Activated T-helper 1 cell treated with anti-CD3 and anti-CD28 coated beads, Interleukin-12 subunit alpha, Interleukin-12 subunit beta, Interleukin-2, Interleukin-4 antibody, amounts not matched to agents 30 ng/mL and 10 ng/mL and 1 ng/mL, durations not matched to agents 14 hours and 24 hours and 36 hours (primary cell): ENCODE measurements at regions of chr5 and their contacts with region 1.

Region 1: DNA sequence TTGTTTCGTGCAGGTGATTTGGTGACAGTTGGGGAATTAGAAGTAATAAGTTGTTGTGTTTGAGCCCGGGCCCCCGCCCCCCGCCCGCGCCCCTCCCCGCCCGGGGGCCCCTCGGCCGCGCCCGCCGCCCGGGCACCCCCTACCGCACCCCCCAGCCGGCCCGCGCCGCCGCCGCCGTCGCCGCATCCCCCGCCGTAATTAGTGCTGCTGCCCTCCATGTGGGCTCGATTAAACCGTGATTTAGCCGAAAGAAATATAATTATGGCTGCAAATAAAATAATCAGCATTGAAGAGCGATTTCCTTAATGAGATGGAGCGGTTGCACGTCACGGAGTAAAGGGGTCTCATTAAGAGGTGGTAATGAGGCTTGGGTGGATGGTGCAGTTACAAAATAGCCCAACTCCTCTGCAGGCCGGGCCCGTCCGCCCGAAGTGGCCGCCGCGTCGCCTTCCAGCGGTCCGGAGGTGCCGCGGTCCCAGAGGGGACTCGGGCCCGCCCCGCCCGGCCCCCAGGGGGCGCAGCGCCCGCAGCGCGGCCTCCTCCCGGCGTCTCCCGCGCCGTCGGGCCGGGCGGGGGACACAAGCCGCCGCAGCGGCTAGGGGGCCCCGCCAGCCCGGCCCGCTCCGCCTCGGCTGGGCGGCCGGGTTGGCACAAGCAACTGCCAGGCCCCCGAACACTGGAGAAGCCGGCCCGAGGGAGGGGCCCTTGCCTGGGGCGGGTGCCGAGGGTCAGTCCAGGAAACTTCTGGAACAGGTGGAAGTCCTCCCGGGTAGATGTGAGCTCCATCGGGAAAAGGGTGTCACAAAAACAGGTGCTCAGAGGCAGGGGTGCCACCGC is 6.9 kb upstream of the OTP start:
- DNase-seq: no peak
- H3K4me3 Mint-ChIP-seq: peak overlapping the region; percentile 54
- H3K27ac Mint-ChIP-seq: peak overlapping the region; percentile 0
- H3K4me1 Mint-ChIP-seq: peaks cover 17% of the 10 kb centered on the region
- H3K27me3 Mint-ChIP-seq: peaks cover 84% of the 10 kb centered on the region

Region 2: DNA sequence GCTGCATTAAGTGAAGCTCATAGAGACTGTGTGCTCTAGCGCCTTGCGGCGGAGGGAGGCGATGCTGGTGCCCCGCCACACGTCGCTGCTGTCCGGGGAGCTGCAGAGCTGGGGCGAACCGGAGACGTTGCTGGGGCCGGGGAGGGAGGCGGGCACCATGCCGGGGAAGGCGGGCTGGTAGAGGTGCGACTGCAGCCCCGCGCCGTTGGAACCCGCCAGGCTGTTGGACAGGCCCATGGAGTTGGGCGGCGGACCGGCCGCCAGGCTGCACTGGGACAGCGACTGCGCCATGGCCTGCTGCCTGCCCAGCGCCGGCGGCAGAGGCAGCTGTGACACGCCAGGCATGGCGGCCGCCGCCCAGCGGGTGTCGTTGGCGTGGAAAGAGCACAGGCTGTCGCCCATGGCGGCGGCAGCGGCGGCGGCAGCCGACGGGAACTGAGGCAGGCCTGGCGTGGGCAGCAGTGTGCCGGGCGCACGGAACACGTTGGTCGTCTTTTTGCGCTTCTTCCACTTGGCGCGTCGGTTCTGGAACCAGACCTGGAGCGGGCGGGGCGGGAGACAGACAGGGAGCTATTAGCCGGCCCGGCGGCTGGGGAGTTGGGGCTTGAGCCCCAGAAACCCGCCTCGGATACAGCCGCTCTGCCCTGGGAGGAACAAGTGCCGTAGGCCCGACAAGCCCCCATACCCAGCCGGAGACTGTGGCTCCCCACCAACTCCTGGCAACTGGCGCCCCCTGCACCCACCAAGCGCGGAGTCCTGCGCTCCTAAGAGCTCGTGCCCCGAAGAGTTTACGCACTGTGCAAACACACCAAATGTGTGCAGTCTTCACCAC is 14.9 kb before region 1 on chr5:
- intact Hi-C with region 1: loop called (anchors 1 kb)
- DNase-seq: peak; percentile 20
- H3K4me3 Mint-ChIP-seq: peak overlapping the region; percentile 72
- H3K27ac Mint-ChIP-seq: peak overlapping the region; percentile 72
- H3K4me1 Mint-ChIP-seq: peaks cover 28% of the 10 kb centered on the region
- H3K27me3 Mint-ChIP-seq: peaks cover 75% of the 10 kb centered on the region

Region 3: DNA sequence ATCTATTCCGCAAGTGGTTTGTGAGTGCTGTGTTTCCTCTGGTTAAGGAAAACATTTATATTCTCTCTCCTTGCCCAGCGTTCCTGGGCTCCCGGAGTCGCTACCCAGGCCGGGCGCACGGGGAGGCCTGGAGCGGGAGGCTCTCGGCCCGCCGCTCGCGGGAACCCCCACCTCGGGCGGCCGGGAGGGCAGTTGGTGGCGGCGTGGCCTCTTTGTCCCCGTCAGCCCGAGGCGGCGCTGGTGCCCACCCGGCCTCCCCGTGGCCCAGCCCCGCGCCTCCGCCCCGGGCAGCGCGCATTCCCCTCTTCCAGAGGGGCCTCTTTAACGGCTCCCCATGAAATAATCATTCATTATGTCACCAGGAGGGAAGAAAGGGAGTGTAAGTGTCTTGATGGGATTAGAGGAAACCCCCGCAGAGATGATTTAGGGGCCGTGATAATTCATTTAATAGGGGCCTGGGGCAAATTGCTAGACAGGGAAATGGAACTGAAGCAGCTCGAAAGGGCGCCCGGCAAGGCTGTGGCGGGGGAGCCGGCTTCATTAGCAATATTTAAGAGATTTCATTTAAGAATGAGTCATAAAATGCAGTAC is 312.6 kb after region 1 on chr5:
- intact Hi-C with region 1: loop called (anchors 5 kb)
- DNase-seq: no peak
- H3K4me3 Mint-ChIP-seq: no peak overlapping the region
- H3K27ac Mint-ChIP-seq: no peak overlapping the region
- H3K4me1 Mint-ChIP-seq: peaks cover 12% of the 10 kb centered on the region
- H3K27me3 Mint-ChIP-seq: peaks cover 36% of the 10 kb centered on the region

Region 4: GRCh38 chr5:78162253-78162862 is 517.0 kb after region 1 on chr5:
- intact Hi-C with region 1: loop called (anchors 2 kb)
- DNase-seq: no peak
- H3K4me3 Mint-ChIP-seq: no peak overlapping the region
- H3K27ac Mint-ChIP-seq: no peak overlapping the region
- H3K4me1 Mint-ChIP-seq: no peaks in the 10 kb centered on the region
- H3K27me3 Mint-ChIP-seq: no peaks in the 10 kb centered on the region